ENCODE measurements at regions of chr11 and their contacts with region 1.

Region 1: DNA sequence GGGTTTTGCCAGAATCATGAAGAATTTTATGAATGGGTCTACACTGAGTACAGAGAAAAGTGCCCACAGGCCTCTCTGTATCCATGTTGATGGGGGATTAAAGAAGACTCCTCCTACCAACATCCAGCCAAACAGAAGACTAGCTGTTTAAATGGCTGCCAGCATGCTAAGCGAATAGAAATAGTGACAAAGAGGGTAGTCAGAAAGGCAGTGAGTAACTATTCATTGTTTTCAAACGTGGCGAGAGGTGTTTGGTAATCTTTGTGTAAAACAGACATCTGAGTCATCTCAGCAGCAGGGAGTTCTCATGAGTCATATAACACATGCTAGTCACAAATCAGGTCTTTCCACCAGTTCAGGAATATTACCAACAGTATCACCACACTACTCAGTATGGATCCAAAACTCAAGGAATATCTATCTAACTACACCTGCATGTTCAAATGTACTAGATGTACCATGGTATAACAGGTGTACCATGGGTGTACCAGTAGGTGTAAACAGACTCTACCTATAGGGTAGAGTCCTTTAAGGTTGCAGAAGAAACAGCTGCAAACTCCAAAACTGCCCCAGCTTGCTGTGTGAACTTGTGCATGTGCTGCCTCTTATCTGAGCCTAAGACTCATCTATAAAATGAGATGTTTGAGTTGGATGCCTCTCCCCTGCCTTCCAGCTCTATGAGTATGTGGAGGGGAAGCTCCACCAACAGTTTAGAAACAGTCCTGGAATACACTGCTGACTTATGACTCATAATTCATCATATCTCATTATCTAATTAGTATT is 82.0 kb downstream of the SLC1A2 start:
- DNase-seq: peak; percentile 93
- H3K4me3 ChIP-seq: no peak overlapping the region
- H3K27me3 ChIP-seq: no peaks in the 10 kb centered on the region
- CTCF ChIP-seq: no peak

Region 2: GRCh38 chr11:34318111-34319037 is 1019.0 kb before region 1 on chr11:
- CTCF ChIA-PET with region 1: no interaction called
- POLR2A ChIA-PET with region 1: no interaction called
- DNase-seq: no peak
- H3K4me3 ChIP-seq: no peak overlapping the region
- H3K27me3 ChIP-seq: no peaks in the 10 kb centered on the region
- CTCF ChIP-seq: no peak

Region 3: DNA sequence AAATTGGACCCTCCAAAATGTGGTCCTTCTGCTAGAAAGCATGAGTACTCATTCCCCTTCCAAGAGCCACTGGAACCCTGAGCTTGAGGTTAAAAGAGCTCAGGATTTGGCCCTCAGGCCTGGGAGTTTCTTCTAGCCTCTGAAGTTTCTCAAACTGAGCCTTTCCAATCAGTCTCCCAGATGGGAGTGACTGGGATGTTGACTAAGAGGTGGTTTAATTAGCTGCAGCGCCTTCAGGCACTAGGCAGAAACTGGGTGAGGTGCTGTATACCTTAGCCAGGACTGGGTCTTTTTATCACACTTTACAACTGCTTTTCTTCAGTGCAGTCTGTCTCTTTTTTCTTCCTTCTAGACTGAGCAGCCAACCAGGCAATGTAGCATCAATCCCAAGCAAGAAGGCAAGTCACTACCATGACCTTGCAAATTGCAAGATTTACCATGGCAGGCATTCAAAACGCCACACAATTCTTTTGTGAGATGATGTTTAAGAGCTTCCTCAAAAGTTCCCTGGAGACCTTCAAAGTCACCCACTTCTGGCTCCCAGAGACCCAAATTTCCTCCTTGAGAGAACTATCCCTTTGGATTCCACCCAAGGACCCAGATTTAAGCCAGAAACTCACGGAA is 11.0 kb before region 1 on chr11:
- CTCF ChIA-PET with region 1: interaction called, 10 read pairs
- POLR2A ChIA-PET with region 1: interaction called, 4 read pairs
- DNase-seq: no peak
- H3K4me3 ChIP-seq: no peak overlapping the region
- H3K27me3 ChIP-seq: no peaks in the 10 kb centered on the region
- CTCF ChIP-seq: no peak